ENCODE measurements at regions of chr1 and their contacts with region 1.

Region 1: GRCh38 chr1:30166174-30166573 is 557.2 kb downstream of the MATN1 start:
- DNase-seq: no peak
- H3K4me3 Mint-ChIP-seq: no peak overlapping the region
- H3K27ac Mint-ChIP-seq: no peak overlapping the region
- H3K4me1 Mint-ChIP-seq: no peaks in the 10 kb centered on the region
- H3K27me3 Mint-ChIP-seq: peaks cover 19% of the 10 kb centered on the region

Region 2: GRCh38 chr1:30232288-30232899 is 66.2 kb after region 1 on chr1:
- intact Hi-C with region 1: loop called (anchors 2 kb)
- DNase-seq: no peak
- H3K4me3 Mint-ChIP-seq: no peak overlapping the region
- H3K27ac Mint-ChIP-seq: no peak overlapping the region
- H3K4me1 Mint-ChIP-seq: no peaks in the 10 kb centered on the region
- H3K27me3 Mint-ChIP-seq: no peaks in the 10 kb centered on the region